ENCODE measurements at regions of chr9 and their contacts with region 1.

Region 1: GRCh38 chr9:36450110-36450732 is 50.2 kb upstream of the RNF38 start:
- DNase-seq: peak; percentile 19 to 54 (median 30)
- ATAC-seq: peak; percentile 55; the same call in 2 of the 3 replicates
- H3K4me3 ChIP-seq: no peak overlapping the region
- H3K27ac ChIP-seq: no peak overlapping the region
- H3K4me1 ChIP-seq: no peaks in the 10 kb centered on the region; a peak in 2 of 5 replicates
- H3K27me3 ChIP-seq: no peaks in the 10 kb centered on the region
- CTCF ChIP-seq: peak; percentile 52 to 71 (median 53); a peak in 5 of 6 replicates
- EP300 ChIP-seq: no peak
- POLR2A ChIP-seq: no peak
- RAD21 ChIP-seq: peak; percentile 62 to 64

Region 2: GRCh38 chr9:36415822-36416515 is 34.3 kb before region 1 on chr9:
- CTCF ChIA-PET with region 1: no interaction called
- POLR2A ChIA-PET with region 1: no interaction called
- in situ Hi-C with region 1: no loop called
- intact Hi-C with region 1: loop called (anchors 2 kb)
- DNase-seq: no peak
- ATAC-seq: no peak
- H3K4me3 ChIP-seq: no peak overlapping the region
- H3K27ac ChIP-seq: no peak overlapping the region
- H3K4me1 ChIP-seq: no peaks in the 10 kb centered on the region
- H3K27me3 ChIP-seq: no peaks in the 10 kb centered on the region
- CTCF ChIP-seq: peak in 1 of 3 experiments; percentile 5; a peak in 1 of 6 replicates
- EP300 ChIP-seq: no peak
- POLR2A ChIP-seq: no peak
- RAD21 ChIP-seq: no peak

Region 3: DNA sequence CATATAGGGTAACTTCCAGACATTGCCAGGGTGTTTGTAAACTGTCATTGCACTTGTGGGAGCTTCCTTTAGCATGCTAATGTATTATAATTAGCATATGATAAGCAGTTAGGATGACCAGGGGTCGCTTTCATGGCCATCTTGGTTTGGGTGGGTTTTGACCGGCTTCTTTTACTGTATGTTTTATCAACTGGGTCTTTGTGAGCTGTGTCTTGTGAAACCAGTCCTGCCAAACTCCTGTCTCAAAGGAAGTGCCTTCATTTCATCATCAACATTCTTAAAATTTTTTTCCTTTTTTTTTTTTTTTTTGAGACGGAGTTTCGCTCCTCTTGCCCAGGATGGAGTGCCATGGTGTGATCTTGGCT is 110.6 kb after region 1 on chr9:
- CTCF ChIA-PET with region 1: interaction called, 6 read pairs
- POLR2A ChIA-PET with region 1: no interaction called
- in situ Hi-C with region 1: no loop called
- intact Hi-C with region 1: loop called (anchors 2 kb)
- DNase-seq: no peak
- ATAC-seq: no peak
- H3K4me3 ChIP-seq: no peak overlapping the region
- H3K27ac ChIP-seq: no peak overlapping the region
- H3K4me1 ChIP-seq: peaks cover 0 to 6% of the 10 kb centered on the region in 2 experiments; a peak in 3 of 5 replicates
- H3K27me3 ChIP-seq: no peaks in the 10 kb centered on the region
- CTCF ChIP-seq: no peak
- EP300 ChIP-seq: no peak
- POLR2A ChIP-seq: no peak
- RAD21 ChIP-seq: no peak